Activated CD4-positive, alpha-beta memory T cell treated with anti-CD3 and anti-CD28 coated beads for 36 hours (primary cell): ENCODE measurements at regions of chr9 and their contacts with region 1.

Region 1: GRCh38 chr9:20356403-20357035 is 265.8 kb downstream of the MLLT3 start:
- DNase-seq: peak; percentile 72
- H3K4me3 Mint-ChIP-seq: no peak overlapping the region
- H3K27ac Mint-ChIP-seq: no peak overlapping the region
- H3K4me1 Mint-ChIP-seq: peaks cover 61% of the 10 kb centered on the region
- H3K27me3 Mint-ChIP-seq: no peaks in the 10 kb centered on the region

Region 2: DNA sequence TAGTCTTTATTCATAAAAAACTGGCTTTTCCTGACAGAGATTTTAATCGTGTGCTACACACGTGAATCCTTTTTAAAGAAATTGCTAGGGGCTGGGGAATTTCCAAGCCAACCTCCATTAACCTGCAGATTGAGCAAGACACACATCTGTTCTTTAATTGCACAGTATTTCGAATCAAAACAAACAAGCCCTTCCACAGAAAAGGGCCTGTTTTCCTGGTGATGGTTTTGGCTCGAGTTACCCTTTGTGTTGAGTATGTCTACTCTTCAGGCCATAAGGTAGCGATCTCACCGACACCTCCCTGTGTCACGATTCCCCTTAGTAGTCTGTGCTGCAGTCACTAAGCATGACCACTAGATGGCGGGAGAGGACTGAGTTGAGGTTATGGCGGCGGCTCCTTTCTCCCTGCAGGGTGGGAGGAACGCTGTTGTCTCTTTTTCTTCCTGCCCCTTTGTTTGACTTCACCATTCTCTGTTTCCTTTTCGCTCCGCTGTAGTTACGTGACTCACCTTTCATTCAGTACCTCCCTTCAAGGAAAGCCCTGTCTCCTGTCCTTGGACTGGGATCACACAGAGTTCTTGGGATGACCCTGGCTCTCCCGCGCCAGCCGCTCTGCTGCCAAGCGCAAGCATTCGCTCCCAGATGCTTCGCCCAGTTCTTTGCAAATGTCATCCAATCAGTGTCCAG is 430.6 kb before region 1 on chr9:
- CTCF ChIA-PET with region 1: interaction called, 5 read pairs
- POLR2A ChIA-PET with region 1: no interaction called
- intact Hi-C with region 1: loop called (anchors 1 kb)
- DNase-seq: peak; percentile 86
- H3K4me3 Mint-ChIP-seq: peak overlapping the region; percentile 50
- H3K27ac Mint-ChIP-seq: no peak overlapping the region
- H3K4me1 Mint-ChIP-seq: peaks cover 15% of the 10 kb centered on the region
- H3K27me3 Mint-ChIP-seq: peaks cover 12% of the 10 kb centered on the region

Region 3: GRCh38 chr9:20209391-20210340 is 146.9 kb before region 1 on chr9:
- CTCF ChIA-PET with region 1: interaction called, 6 read pairs
- POLR2A ChIA-PET with region 1: no interaction called
- intact Hi-C with region 1: loop called (anchors 1 kb)
- DNase-seq: peak; percentile 79
- H3K4me3 Mint-ChIP-seq: no peak overlapping the region
- H3K27ac Mint-ChIP-seq: peak overlapping the region; percentile 89
- H3K4me1 Mint-ChIP-seq: peaks cover 33% of the 10 kb centered on the region
- H3K27me3 Mint-ChIP-seq: no peaks in the 10 kb centered on the region

Region 4: GRCh38 chr9:20508242-20508641 is 151.7 kb after region 1 on chr9:
- CTCF ChIA-PET with region 1: no interaction called
- POLR2A ChIA-PET with region 1: no interaction called
- intact Hi-C with region 1: loop called (anchors 5 kb)
- DNase-seq: peak; percentile 18
- H3K4me3 Mint-ChIP-seq: no peak overlapping the region
- H3K27ac Mint-ChIP-seq: no peak overlapping the region
- H3K4me1 Mint-ChIP-seq: peaks cover 76% of the 10 kb centered on the region
- H3K27me3 Mint-ChIP-seq: no peaks in the 10 kb centered on the region

Region 5: GRCh38 chr9:20884985-20885593 is 528.6 kb after region 1 on chr9:
- CTCF ChIA-PET with region 1: interaction called, 15 read pairs
- POLR2A ChIA-PET with region 1: no interaction called
- intact Hi-C with region 1: no loop called
- DNase-seq: peak; percentile 69
- H3K4me3 Mint-ChIP-seq: no peak overlapping the region
- H3K27ac Mint-ChIP-seq: no peak overlapping the region
- H3K4me1 Mint-ChIP-seq: no peaks in the 10 kb centered on the region
- H3K27me3 Mint-ChIP-seq: no peaks in the 10 kb centered on the region

Region 6: DNA sequence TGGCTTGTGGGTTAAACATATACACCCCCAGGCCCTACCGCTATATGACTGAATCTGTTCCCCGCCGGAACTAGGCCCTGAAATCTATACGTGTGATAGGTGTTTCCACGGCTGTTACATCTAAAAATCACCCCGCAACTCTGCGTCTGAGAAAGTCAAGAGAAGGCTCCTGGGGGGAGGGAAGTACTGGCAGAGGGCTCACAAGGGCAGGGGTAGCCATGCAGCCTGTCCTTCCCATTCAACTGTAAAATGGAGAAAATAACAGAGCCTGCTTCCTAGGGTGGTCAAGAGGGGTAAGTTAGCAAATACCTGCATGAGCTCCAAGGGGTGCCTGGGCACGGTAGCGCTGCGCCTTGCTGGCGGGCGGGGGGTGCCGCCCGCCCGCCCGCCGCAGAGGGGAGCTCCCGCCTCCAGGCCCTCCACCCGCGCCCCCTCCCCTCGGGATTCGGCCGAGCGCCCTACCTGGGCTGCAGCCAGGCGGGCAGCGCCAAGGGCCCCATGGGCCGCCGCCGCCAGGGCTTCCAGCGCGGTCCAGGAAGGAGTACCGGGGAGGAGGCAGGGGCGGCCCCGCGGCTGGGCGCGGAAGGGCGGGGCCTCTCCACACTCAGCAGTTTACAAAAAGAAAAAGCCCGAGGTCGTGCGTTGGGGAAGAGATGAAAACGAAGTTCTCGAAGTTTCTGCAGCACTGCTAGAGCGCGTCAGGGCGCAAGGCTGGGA is 674.7 kb after region 1 on chr9 and contains the start of gene HACD4:
- CTCF ChIA-PET with region 1: no interaction called
- POLR2A ChIA-PET with region 1: no interaction called
- intact Hi-C with region 1: loop called (anchors 2 kb)
- DNase-seq: peak; percentile 77
- H3K4me3 Mint-ChIP-seq: peak within 1 kb of the TSS; percentile 60
- H3K27ac Mint-ChIP-seq: peak within 1 kb of the TSS; percentile 66
- H3K4me1 Mint-ChIP-seq: peaks cover 21% of the 10 kb centered on the region
- H3K27me3 Mint-ChIP-seq: no peaks in the 10 kb centered on the region
- total RNA-seq, gene HACD4: 1.9 to 2.4 TPM